ENCODE measurements at regions of chr18 and their contacts with region 1.

Region 1: GRCh38 chr18:32048507-32049091 is 30.0 kb downstream of the RNF125 start:
- DNase-seq: peak; percentile 14
- H3K4me3 ChIP-seq: no peak overlapping the region
- H3K27ac ChIP-seq: no peak overlapping the region
- H3K4me1 ChIP-seq: peaks cover 18% of the 10 kb centered on the region
- CTCF ChIP-seq: no peak

Region 2: DNA sequence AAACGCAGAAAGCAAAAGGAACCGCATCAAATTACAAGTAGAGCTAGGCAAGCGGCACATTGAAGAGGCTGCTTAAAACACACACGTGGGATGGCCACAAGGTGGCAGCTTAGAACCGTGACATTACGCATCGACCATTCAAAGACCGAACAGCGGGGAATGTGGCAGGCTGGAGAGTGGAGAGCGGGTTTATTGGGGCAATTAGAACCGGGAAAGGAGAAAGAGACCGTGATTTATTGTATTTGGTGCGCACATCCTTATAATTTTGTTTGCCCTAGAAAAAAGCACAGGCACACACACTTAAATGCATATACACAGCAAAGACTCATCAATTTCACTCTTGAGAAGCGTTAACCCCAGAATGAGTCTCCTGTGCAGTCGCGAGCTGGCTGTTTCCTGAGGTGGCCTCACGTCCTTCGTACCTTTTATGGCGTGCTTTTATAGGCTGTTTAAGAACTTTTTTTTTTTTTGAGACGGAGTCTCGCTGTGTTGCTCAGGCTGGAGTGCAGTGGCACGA is 109.6 kb after region 1 on chr18:
- CTCF ChIA-PET with region 1: no interaction called
- POLR2A ChIA-PET with region 1: interaction called, 10 read pairs
- intact Hi-C with region 1: no loop called
- DNase-seq: peak; percentile 67
- H3K4me3 ChIP-seq: no peak overlapping the region
- H3K27ac ChIP-seq: no peak overlapping the region
- H3K4me1 ChIP-seq: no peaks in the 10 kb centered on the region
- CTCF ChIP-seq: peak; percentile 78

Measured in OCI-LY7 (cell line).